A673 (cell line): ENCODE measurements at regions of chr10 and their contacts with region 1.

Region 1: GRCh38 chr10:131312478-131312836 is 936 bp upstream of the TCERG1L start:
- DNase-seq: peak; percentile 87
- H3K4me3 ChIP-seq: peak overlapping the region; percentile 86
- H3K27ac ChIP-seq: peak overlapping the region; percentile 70
- H3K4me1 ChIP-seq: peaks cover 5% of the 10 kb centered on the region
- H3K27me3 ChIP-seq: no peaks in the 10 kb centered on the region
- CTCF ChIP-seq: peak; percentile 87

Region 2: GRCh38 chr10:129915526-129916378 is 1396.7 kb before region 1 on chr10:
- CTCF ChIA-PET with region 1: no interaction called
- POLR2A ChIA-PET with region 1: no interaction called
- intact Hi-C with region 1: no loop called
- DNase-seq: no peak
- H3K4me3 ChIP-seq: no peak overlapping the region
- H3K27ac ChIP-seq: peak overlapping the region; percentile 50
- H3K4me1 ChIP-seq: peaks cover 25% of the 10 kb centered on the region
- H3K27me3 ChIP-seq: no peaks in the 10 kb centered on the region
- CTCF ChIP-seq: no peak

Region 3: DNA sequence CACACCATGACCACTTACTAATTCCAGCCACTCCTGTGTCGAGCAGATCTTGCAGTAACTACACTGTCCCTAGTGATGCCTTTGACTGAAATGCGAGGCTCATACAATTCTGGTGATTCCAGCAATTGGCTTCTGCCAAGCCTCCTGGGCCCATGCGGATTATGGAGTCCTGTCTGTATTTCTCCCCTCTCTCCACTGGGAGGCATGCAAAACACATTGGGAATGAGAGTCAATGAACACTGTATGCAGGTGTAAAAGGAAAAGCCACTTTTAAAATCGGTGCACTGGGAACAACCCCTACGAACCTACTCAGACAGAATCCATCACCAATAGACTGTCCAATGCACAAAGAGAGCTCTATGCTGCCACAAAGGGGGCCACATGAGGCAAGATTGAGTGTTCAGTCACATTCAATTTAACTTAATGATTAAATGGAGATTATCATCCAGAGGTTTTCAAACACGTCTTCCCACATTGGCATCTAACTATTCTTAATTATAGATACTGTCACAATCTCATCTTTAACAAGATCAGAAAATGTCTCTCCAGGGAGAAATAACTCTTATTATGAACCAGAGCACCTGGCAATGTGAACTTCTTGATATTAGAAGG is 625.7 kb before region 1 on chr10:
- CTCF ChIA-PET with region 1: no interaction called
- POLR2A ChIA-PET with region 1: no interaction called
- intact Hi-C with region 1: loop called (anchors 5 kb)
- DNase-seq: peak; percentile 75
- H3K4me3 ChIP-seq: no peak overlapping the region
- H3K27ac ChIP-seq: no peak overlapping the region
- H3K4me1 ChIP-seq: no peaks in the 10 kb centered on the region
- H3K27me3 ChIP-seq: no peaks in the 10 kb centered on the region
- CTCF ChIP-seq: peak; percentile 70

Region 4: GRCh38 chr10:130820880-130821482 is 491.5 kb before region 1 on chr10:
- CTCF ChIA-PET with region 1: no interaction called
- POLR2A ChIA-PET with region 1: no interaction called
- intact Hi-C with region 1: no loop called
- DNase-seq: no peak
- H3K4me3 ChIP-seq: no peak overlapping the region
- H3K27ac ChIP-seq: no peak overlapping the region
- H3K4me1 ChIP-seq: no peaks in the 10 kb centered on the region
- H3K27me3 ChIP-seq: no peaks in the 10 kb centered on the region
- CTCF ChIP-seq: no peak

Region 5: GRCh38 chr10:131277278-131277677 is 35.2 kb before region 1 on chr10:
- CTCF ChIA-PET with region 1: interaction called, 10 read pairs
- POLR2A ChIA-PET with region 1: no interaction called
- intact Hi-C with region 1: no loop called
- DNase-seq: no peak
- H3K4me3 ChIP-seq: no peak overlapping the region
- H3K27ac ChIP-seq: no peak overlapping the region
- H3K4me1 ChIP-seq: no peaks in the 10 kb centered on the region
- H3K27me3 ChIP-seq: no peaks in the 10 kb centered on the region
- CTCF ChIP-seq: no peak

Region 6: GRCh38 chr10:131337741-131338140 is 25.3 kb after region 1 on chr10:
- CTCF ChIA-PET with region 1: no interaction called
- POLR2A ChIA-PET with region 1: no interaction called
- intact Hi-C with region 1: loop called (anchors 1 kb)
- DNase-seq: no peak
- H3K4me3 ChIP-seq: no peak overlapping the region
- H3K27ac ChIP-seq: peak overlapping the region; percentile 62
- H3K4me1 ChIP-seq: peaks cover 22% of the 10 kb centered on the region
- H3K27me3 ChIP-seq: no peaks in the 10 kb centered on the region
- CTCF ChIP-seq: no peak

Region 7: GRCh38 chr10:131874991-131875451 is 562.6 kb after region 1 on chr10:
- CTCF ChIA-PET with region 1: no interaction called
- POLR2A ChIA-PET with region 1: no interaction called
- intact Hi-C with region 1: loop called (anchors 10 kb)
- DNase-seq: peak; percentile 89
- H3K4me3 ChIP-seq: no peak overlapping the region
- H3K27ac ChIP-seq: no peak overlapping the region
- H3K4me1 ChIP-seq: peaks cover 7% of the 10 kb centered on the region
- H3K27me3 ChIP-seq: no peaks in the 10 kb centered on the region
- CTCF ChIP-seq: peak; percentile 85